PC-9 (cell line): ENCODE measurements at regions of chr2 and their contacts with region 1.

Region 1: DNA sequence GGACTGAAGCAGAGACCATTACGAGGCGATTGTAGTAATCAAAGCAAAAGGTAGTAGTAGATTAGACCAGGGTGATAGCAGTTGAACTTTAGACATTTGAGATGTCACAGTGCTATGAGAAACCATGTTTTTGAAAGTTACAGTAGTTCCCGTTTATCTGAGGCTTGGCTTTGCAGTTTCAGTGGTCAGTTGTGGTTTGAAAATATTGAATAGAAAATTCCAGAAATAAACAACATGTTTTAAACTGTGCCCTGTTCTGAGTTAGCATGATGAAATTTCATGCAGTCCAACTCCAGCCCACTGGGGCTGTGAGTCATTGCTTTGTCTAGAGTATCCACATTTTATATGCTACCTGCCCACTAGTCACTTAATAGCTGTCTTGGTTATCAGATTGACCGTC is 47.5 kb downstream of the ZNF638 start:
- DNase-seq: no peak
- H3K4me3 ChIP-seq: no peak overlapping the region
- H3K27ac ChIP-seq: peak overlapping the region; percentile 55
- H3K4me1 ChIP-seq: no peaks in the 10 kb centered on the region
- H3K27me3 ChIP-seq: no peaks in the 10 kb centered on the region
- CTCF ChIP-seq: no peak

Region 2: GRCh38 chr2:70851704-70852103 is 527.4 kb before region 1 on chr2:
- CTCF ChIA-PET with region 1: no interaction called
- POLR2A ChIA-PET with region 1: no interaction called
- intact Hi-C with region 1: no loop called
- DNase-seq: no peak
- H3K4me3 ChIP-seq: no peak overlapping the region
- H3K27ac ChIP-seq: no peak overlapping the region
- H3K4me1 ChIP-seq: no peaks in the 10 kb centered on the region
- H3K27me3 ChIP-seq: peaks cover 55% of the 10 kb centered on the region
- CTCF ChIP-seq: no peak

Region 3: DNA sequence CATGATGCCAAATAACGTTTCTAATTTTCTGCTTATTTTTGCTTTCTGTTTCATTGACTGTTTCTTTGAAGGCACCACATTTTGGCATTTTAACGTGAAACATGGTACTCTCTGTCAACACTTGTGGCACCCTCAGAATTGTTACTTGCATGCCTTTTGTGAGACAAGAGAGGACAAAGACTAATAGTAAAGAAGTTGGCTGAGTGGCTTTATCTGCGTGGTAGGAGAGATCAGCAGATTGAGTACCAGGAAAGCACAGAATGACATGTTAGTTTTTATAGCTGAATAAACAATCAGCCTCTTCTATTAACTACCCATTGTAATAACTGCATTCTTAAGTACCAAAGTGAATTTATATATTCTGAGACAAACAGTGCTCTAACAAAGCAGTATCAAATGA is 38.9 kb before region 1 on chr2:
- CTCF ChIA-PET with region 1: no interaction called
- POLR2A ChIA-PET with region 1: no interaction called
- intact Hi-C with region 1: loop called (anchors 5 kb)
- DNase-seq: no peak
- H3K4me3 ChIP-seq: no peak overlapping the region
- H3K27ac ChIP-seq: no peak overlapping the region
- H3K4me1 ChIP-seq: 0 out of 2 replicates have a peak, but pooled peaks cover 5% of the 10 kb centered on the region
- H3K27me3 ChIP-seq: no peaks in the 10 kb centered on the region
- CTCF ChIP-seq: no peak